CD8-positive, alpha-beta T cell (primary cell): ENCODE measurements at regions of chr5 and their contacts with region 1.

Region 1: GRCh38 chr5:168219515-168220410 is 71.7 kb upstream of the WWC1 start:
- DNase-seq: peak in 3 of 9 experiments; percentile 20 to 72 (median 65)
- ATAC-seq: peak; percentile 34
- H3K4me3 ChIP-seq: no peak overlapping the region
- H3K4me3 Mint-ChIP-seq: no peak overlapping the region
- H3K27ac ChIP-seq: no peak overlapping the region
- H3K27ac Mint-ChIP-seq: no peak overlapping the region
- H3K4me1 ChIP-seq: no peaks in the 10 kb centered on the region
- H3K4me1 Mint-ChIP-seq: peaks cover 1% of the 10 kb centered on the region
- H3K27me3 ChIP-seq: no peaks in the 10 kb centered on the region
- H3K27me3 Mint-ChIP-seq: no peaks in the 10 kb centered on the region
- CTCF ChIP-seq: peak; percentile 78

Region 2: GRCh38 chr5:167723254-167723871 is 496.4 kb before region 1 on chr5:
- CTCF ChIA-PET with region 1: no interaction called
- POLR2A ChIA-PET with region 1: no interaction called
- intact Hi-C with region 1: loop called in 1 of 2 experiments (anchors 5 kb)
- DNase-seq: peak in 8 of 9 experiments; percentile 14 to 71 (median 51)
- ATAC-seq: no peak
- H3K4me3 ChIP-seq: no peak overlapping the region
- H3K4me3 Mint-ChIP-seq: no peak overlapping the region
- H3K27ac ChIP-seq: no peak overlapping the region
- H3K27ac Mint-ChIP-seq: no peak overlapping the region
- H3K4me1 ChIP-seq: no peaks in the 10 kb centered on the region
- H3K4me1 Mint-ChIP-seq: peaks cover 4% of the 10 kb centered on the region
- H3K27me3 ChIP-seq: no peaks in the 10 kb centered on the region
- H3K27me3 Mint-ChIP-seq: no peaks in the 10 kb centered on the region
- CTCF ChIP-seq: peak; percentile 55

Region 3: GRCh38 chr5:168282120-168282519 is 62.4 kb after region 1 on chr5:
- CTCF ChIA-PET with region 1: no interaction called
- POLR2A ChIA-PET with region 1: no interaction called
- intact Hi-C with region 1: no loop called
- DNase-seq: no peak
- ATAC-seq: no peak
- H3K4me3 ChIP-seq: no peak overlapping the region
- H3K4me3 Mint-ChIP-seq: no peak overlapping the region
- H3K27ac ChIP-seq: no peak overlapping the region
- H3K27ac Mint-ChIP-seq: no peak overlapping the region
- H3K4me1 ChIP-seq: no peaks in the 10 kb centered on the region
- H3K4me1 Mint-ChIP-seq: no peaks in the 10 kb centered on the region
- H3K27me3 ChIP-seq: no peaks in the 10 kb centered on the region
- H3K27me3 Mint-ChIP-seq: peaks cover 11% of the 10 kb centered on the region
- CTCF ChIP-seq: no peak

Region 4: GRCh38 chr5:168600409-168600808 is 380.6 kb after region 1 on chr5:
- CTCF ChIA-PET with region 1: no interaction called
- POLR2A ChIA-PET with region 1: no interaction called
- intact Hi-C with region 1: no loop called
- DNase-seq: no peak
- ATAC-seq: no peak
- H3K4me3 ChIP-seq: no peak overlapping the region
- H3K4me3 Mint-ChIP-seq: no peak overlapping the region
- H3K27ac ChIP-seq: no peak overlapping the region
- H3K27ac Mint-ChIP-seq: no peak overlapping the region
- H3K4me1 ChIP-seq: no peaks in the 10 kb centered on the region
- H3K4me1 Mint-ChIP-seq: peaks cover 5% of the 10 kb centered on the region
- H3K27me3 ChIP-seq: no peaks in the 10 kb centered on the region
- H3K27me3 Mint-ChIP-seq: peaks cover 19% of the 10 kb centered on the region
- CTCF ChIP-seq: no peak